Breast epithelium (tissue), 4 donors: ENCODE measurements at regions of chr9 and their contacts with region 1.

Region 1: GRCh38 chr9:3976865-3977613 is 322.8 kb downstream of the GLIS3 start:
- DNase-seq: no peak
- H3K4me3 ChIP-seq: no peak overlapping the region
- H3K27ac ChIP-seq: no peak overlapping the region
- H3K4me1 ChIP-seq: peaks cover 0 to 2% of the 10 kb centered on the region in 2 donors
- H3K27me3 ChIP-seq: no peaks in the 10 kb centered on the region
- CTCF ChIP-seq: no peak
- POLR2A ChIP-seq: no peak

Region 2: DNA sequence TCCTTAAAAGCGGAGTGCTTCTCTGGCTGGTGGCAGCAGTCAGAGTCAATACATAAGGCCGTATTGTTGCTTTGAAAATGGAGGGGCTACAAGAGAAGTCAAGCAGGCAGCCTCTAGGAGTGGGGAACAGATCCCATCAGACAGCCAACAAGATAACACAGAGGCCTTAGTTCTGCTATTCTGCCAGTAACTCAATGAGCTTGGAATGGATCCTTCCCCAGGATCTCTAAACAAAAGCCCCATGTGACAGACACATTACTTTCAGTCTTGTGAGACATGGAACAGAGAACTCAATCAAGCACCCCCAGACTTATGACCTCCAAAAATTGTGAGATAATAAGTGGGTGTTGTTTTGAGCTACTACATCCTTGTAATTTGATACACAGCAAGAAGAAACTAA is 609.9 kb before region 1 on chr9:
- intact Hi-C with region 1: no loop called
- DNase-seq: no peak
- H3K4me3 ChIP-seq: no peak overlapping the region
- H3K27ac ChIP-seq: no peak overlapping the region
- H3K4me1 ChIP-seq: no peaks in the 10 kb centered on the region
- H3K27me3 ChIP-seq: no peaks in the 10 kb centered on the region
- CTCF ChIP-seq: no peak
- POLR2A ChIP-seq: no peak

Region 3: DNA sequence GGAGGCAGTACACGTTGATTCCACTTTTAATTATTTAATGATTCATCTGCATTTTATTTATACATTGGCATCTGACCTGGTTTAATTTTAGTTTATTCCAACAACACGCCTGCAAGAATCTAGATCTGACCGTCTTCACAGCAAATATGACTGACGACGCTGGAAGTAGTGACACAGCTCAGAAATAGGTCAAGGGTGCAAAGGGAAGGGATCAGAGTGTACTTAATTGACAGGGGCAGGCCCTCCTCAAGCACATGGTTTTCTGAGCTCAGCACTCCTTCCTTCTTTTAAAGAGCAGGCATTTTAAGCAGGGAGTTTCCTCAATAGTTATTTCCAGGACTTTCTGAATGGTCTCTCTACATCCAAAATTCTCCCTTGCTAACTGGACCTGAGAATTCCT is 197.7 kb after region 1 on chr9:
- intact Hi-C with region 1: no loop called
- DNase-seq: no peak
- H3K4me3 ChIP-seq: no peak overlapping the region
- H3K27ac ChIP-seq: no peak overlapping the region
- H3K4me1 ChIP-seq: no peaks in the 10 kb centered on the region
- H3K27me3 ChIP-seq: no peaks in the 10 kb centered on the region
- CTCF ChIP-seq: no peak
- POLR2A ChIP-seq: no peak

Region 4: DNA sequence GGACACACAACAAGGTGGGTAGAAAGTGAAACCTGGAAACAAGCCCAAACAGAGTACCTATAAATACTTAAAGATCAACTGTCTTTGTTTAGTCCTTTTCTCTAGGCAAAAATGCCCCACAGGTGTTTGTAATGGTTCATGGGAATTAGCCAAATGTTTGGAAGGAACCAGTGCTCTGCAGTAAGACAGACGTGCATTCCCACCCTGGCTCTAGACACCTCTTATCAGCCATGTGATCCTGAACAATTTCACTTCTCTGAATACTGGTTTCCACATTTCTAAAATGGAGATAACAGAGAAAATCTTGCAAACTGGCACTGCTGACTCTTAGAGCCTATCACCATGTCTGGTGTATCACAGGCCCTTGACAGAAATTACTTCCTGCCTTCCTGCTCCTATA is 292.8 kb after region 1 on chr9:
- intact Hi-C with region 1: no loop called
- DNase-seq: no peak
- H3K4me3 ChIP-seq: no peak overlapping the region
- H3K27ac ChIP-seq: no peak overlapping the region
- H3K4me1 ChIP-seq: no peaks in the 10 kb centered on the region
- H3K27me3 ChIP-seq: no peaks in the 10 kb centered on the region
- CTCF ChIP-seq: no peak
- POLR2A ChIP-seq: no peak

Region 5: GRCh38 chr9:4541856-4542255 is 564.8 kb after region 1 on chr9:
- intact Hi-C with region 1: loop called (anchors 5 kb)
- DNase-seq: no peak
- H3K4me3 ChIP-seq: no peak overlapping the region
- H3K27ac ChIP-seq: no peak overlapping the region
- H3K4me1 ChIP-seq: no peaks in the 10 kb centered on the region
- H3K27me3 ChIP-seq: no peaks in the 10 kb centered on the region
- CTCF ChIP-seq: no peak
- POLR2A ChIP-seq: no peak